ENCODE measurements at regions of chr11 and their contacts with region 1.

Region 1: DNA sequence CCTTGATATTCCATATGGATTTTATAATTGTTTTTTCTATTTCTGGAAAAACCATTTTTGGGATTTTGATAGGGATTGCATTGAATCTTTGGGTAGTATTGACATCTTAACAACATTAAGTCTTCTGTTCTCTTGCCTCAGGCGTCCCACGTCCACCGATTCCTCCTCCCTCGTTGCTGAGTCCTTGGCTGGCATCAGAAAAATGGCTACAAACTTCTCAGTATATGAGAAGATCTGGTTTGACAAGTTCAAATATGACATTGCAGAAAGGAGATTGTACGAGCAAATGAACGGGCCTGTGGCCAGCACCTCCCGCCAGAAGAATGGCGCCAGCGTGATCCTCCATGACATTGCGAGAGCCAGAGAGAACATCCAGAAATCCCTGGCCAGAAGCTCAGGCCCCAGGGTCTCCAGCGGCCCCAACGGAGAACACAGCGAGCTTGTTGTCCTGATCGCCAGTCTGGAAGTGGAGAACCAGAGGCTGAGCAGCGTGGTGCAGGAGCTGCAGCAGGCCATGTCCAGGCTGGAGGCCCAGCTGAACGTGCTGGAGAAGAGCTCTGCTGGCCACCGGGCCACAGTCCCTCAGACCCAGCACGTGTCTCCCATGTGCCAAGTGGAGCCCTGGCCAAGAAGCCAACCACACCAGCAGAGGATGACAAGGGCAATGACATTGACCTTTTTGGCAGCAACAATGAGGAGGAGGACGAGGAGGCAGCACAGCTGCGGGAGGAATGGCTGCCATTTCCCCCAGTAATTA is 20.7 kb upstream of the SCGB1D1 start:
- DNase-seq: no peak
- ATAC-seq: no peak
- H3K4me3 ChIP-seq: no peak overlapping the region
- H3K4me3 Mint-ChIP-seq: no peak overlapping the region
- H3K27ac ChIP-seq: no peak overlapping the region
- H3K27ac Mint-ChIP-seq: no peak overlapping the region
- H3K4me1 ChIP-seq: peaks cover 5% of the 10 kb centered on the region
- H3K4me1 Mint-ChIP-seq: no peaks in the 10 kb centered on the region
- H3K27me3 ChIP-seq: peaks cover 22 to 24% of the 10 kb centered on the region in 2 experiments
- H3K27me3 Mint-ChIP-seq: peaks cover 35% of the 10 kb centered on the region
- CTCF ChIP-seq: no peak

Region 2: DNA sequence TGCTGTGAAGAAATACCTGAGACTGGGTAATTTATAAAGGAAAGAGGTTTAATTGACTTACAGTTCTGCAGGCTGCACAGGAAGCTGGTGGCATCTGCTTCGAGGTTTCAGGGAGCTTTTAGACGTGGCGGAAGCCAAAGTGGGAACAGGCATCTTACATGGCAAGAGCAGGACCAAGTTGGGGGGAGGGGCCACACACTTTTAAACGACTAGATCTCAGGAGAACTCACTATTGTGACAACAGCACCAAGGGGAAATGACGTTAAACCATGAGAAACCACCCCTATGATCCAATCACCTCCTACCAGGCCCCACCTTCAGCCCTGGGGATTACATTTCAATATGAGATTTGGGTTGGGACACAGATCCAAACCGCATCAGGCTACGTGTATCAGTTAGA is 140.7 kb after region 1 on chr11:
- CTCF ChIA-PET with region 1: interaction called, 7 read pairs
- POLR2A ChIA-PET with region 1: no interaction called
- intact Hi-C with region 1: loop called (anchors 1 to 2 kb)
- DNase-seq: peak in 1 of 14 experiments; percentile 21
- ATAC-seq: no peak
- H3K4me3 ChIP-seq: no peak overlapping the region
- H3K4me3 Mint-ChIP-seq: peak overlapping the region; percentile 13
- H3K27ac ChIP-seq: no peak overlapping the region
- H3K27ac Mint-ChIP-seq: no peak overlapping the region
- H3K4me1 ChIP-seq: peaks cover 14% of the 10 kb centered on the region
- H3K4me1 Mint-ChIP-seq: peaks cover 15% of the 10 kb centered on the region
- H3K27me3 ChIP-seq: peaks cover 5 to 20% of the 10 kb centered on the region in 2 experiments
- H3K27me3 Mint-ChIP-seq: peaks cover 65% of the 10 kb centered on the region
- CTCF ChIP-seq: no peak

Region 3: DNA sequence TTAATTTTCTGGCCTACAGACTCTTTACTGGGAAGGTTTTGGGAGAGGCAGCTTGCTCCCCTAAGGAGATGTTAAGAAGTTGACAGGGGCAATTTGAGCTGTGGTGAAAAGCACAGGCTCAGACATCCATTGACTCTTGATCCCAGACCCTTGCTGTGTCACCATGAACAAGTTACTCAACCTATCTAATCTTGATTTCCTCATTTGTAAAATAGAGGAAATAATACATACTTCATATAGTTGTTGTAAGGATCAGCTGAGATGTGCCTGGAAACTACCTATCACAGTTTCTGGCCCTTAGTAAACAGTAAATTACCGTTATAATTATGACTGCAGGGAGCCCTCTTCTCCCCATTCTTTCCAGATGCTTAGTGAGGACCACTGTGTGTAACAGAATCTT is 146.2 kb after region 1 on chr11:
- CTCF ChIA-PET with region 1: interaction called, 7 read pairs
- POLR2A ChIA-PET with region 1: no interaction called
- intact Hi-C with region 1: loop called (anchors 1 to 2 kb)
- DNase-seq: peak in 2 of 14 experiments; percentile 17 to 24
- ATAC-seq: no peak
- H3K4me3 ChIP-seq: no peak overlapping the region
- H3K4me3 Mint-ChIP-seq: no peak overlapping the region
- H3K27ac ChIP-seq: no peak overlapping the region
- H3K27ac Mint-ChIP-seq: no peak overlapping the region
- H3K4me1 ChIP-seq: peaks cover 14% of the 10 kb centered on the region
- H3K4me1 Mint-ChIP-seq: peaks cover 15% of the 10 kb centered on the region
- H3K27me3 ChIP-seq: peaks cover 5 to 20% of the 10 kb centered on the region in 2 experiments
- H3K27me3 Mint-ChIP-seq: peaks cover 69% of the 10 kb centered on the region
- CTCF ChIP-seq: no peak

Region 4: GRCh38 chr11:62372871-62373270 is 203.6 kb after region 1 on chr11:
- CTCF ChIA-PET with region 1: no interaction called
- POLR2A ChIA-PET with region 1: no interaction called
- intact Hi-C with region 1: loop called (anchors 1 to 5 kb)
- DNase-seq: no peak
- ATAC-seq: no peak
- H3K4me3 ChIP-seq: no peak overlapping the region
- H3K4me3 Mint-ChIP-seq: no peak overlapping the region
- H3K27ac ChIP-seq: no peak overlapping the region
- H3K27ac Mint-ChIP-seq: no peak overlapping the region
- H3K4me1 ChIP-seq: peaks cover 21% of the 10 kb centered on the region
- H3K4me1 Mint-ChIP-seq: peaks cover 17% of the 10 kb centered on the region
- H3K27me3 ChIP-seq: no peaks in the 10 kb centered on the region
- H3K27me3 Mint-ChIP-seq: no peaks in the 10 kb centered on the region
- CTCF ChIP-seq: no peak

Measured in CD4-positive, alpha-beta T cell (primary cell).